H1 (cell line): ENCODE measurements at regions of chr10 and their contacts with region 1.

Region 1: DNA sequence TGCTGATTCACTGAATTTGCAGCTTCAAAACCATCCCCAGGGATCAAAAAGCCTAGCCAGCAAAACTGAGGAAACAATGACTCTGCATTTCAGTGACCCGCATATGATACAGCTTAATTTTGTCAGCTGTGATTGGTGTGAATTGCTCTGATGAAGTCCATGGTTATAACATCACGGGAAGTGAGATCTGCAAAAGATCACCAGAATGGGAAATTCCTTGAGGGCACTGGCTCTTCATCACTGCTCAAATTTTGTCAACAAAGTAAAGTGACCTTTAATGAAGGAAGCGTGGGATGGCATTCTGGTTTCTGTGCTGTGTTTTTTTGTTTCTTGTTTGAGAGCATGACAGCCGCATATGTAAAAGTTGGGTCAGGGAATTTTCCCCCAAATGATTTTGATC is 745.9 kb downstream of the GATA3 start:
- DNase-seq: no peak
- H3K4me3 ChIP-seq: no peak overlapping the region
- H3K27ac ChIP-seq: no peak overlapping the region
- H3K4me1 ChIP-seq: peaks cover 0 to 8% (median 0%) of the 10 kb centered on the region in 4 experiments; a peak in 2 of 7 replicates
- H3K27me3 ChIP-seq: peaks cover 0 to 1% (median 0%) of the 10 kb centered on the region in 4 experiments; a peak in 2 of 7 replicates
- CTCF ChIP-seq: no peak
- EP300 ChIP-seq: no peak
- POLR2A ChIP-seq: no peak
- RAD21 ChIP-seq: no peak

Region 2: GRCh38 chr10:8790381-8790780 is 10.0 kb before region 1 on chr10:
- CTCF ChIA-PET with region 1: interaction called, 10 read pairs
- POLR2A ChIA-PET with region 1: no interaction called
- DNase-seq: no peak
- H3K4me3 ChIP-seq: no peak overlapping the region
- H3K27ac ChIP-seq: no peak overlapping the region
- H3K4me1 ChIP-seq: no peaks in the 10 kb centered on the region
- H3K27me3 ChIP-seq: no peaks in the 10 kb centered on the region
- CTCF ChIP-seq: no peak
- EP300 ChIP-seq: no peak
- POLR2A ChIP-seq: no peak
- RAD21 ChIP-seq: no peak